ENCODE measurements at regions of chr6 and their contacts with region 1.

Region 1: DNA sequence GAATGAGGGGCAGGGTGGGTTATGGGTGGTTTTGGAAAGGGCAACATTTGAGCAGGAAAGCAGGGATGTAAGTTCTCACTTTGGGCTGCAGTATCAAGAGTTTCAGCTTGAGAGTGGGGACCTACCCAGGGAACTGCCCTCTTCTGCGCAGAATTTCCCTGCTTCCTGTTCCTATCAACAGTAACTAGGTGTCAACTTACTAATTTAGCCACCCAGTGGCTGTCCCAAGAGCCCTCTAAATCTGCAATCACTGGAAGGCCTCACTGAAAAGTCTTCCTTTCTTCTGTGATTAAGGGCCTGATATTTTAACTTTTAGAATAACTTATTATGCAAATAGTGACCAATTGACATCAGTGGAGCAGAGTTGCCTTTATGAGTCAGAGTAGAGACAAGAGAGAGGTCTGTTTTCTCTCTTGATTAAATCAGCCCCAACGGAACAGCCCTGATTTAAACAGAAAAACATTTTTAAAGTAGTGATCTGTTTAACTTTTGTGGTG is 118.2 kb upstream of the RIPOR2 start:
- DNase-seq: peak in 2 of 5 donors; percentile 28 to 30
- H3K4me3 ChIP-seq: no peak overlapping the region
- H3K4me3 Mint-ChIP-seq: peak overlapping the region in 6 of 8 donors; percentile 6 to 74 (median 37)
- H3K27ac ChIP-seq: peak overlapping the region; percentile 21
- H3K27ac Mint-ChIP-seq: peak overlapping the region; percentile 54 to 90 (median 87)
- H3K4me1 ChIP-seq: peaks cover 94% of the 10 kb centered on the region
- H3K4me1 Mint-ChIP-seq: peaks cover 61 to 88% (median 81%) of the 10 kb centered on the region in 4 donors
- H3K27me3 ChIP-seq: no peaks in the 10 kb centered on the region
- H3K27me3 Mint-ChIP-seq: no peaks in the 10 kb centered on the region

Region 2: DNA sequence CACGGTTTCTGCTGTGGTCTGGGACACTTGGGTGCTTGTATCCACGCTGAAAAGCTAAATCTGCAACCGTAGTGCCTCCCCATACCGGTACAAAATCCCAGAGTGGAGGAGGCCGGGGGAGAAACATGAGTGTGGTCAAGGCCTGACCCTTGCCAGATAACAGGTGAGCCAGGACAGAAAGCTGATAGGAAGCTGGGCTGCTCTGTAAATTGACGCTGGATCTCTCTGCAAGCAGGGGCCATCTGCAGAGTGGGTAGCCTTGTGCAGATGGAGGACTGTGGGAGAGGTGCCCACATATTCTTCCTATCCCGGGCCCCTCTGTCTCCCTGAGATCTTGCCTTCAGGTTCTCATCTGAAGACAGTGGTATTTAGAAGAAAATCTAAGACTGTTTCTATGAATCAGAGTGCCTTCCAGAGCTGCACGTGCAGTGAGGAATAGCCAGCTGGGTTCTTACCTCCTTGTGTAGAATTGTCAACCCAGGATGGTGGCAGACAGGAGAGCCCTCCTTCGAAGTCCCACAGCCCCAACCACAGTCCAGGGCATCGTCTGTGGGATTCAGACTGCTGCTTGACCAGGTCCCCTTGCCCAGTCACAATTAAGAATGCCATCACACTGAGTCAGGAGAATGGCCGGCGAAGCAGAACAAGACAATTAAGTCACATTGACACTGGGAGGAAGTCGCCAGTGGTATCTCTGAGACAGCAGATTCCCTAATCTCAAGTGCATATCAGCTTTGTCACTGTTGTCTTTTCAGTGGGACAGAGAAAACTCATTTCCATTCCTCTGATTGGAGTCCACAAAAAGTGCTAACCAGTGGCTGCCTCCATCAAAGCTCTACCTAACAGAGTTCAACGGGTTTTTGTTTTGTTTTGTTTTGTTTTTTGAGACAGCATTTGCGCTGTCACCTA is 18.1 kb before region 1 on chr6:
- CTCF ChIA-PET with region 1: interaction called, 591 read pairs
- POLR2A ChIA-PET with region 1: interaction called, 120 read pairs
- intact Hi-C with region 1: loop called (anchors 2 kb)
- DNase-seq: peak; percentile 34 to 51 (median 37)
- H3K4me3 ChIP-seq: peak overlapping the region; percentile 44 to 68
- H3K4me3 Mint-ChIP-seq: peak overlapping the region; percentile 84 to 93 (median 90)
- H3K27ac ChIP-seq: peak overlapping the region; percentile 69
- H3K27ac Mint-ChIP-seq: peak overlapping the region; percentile 92 to 100 (median 96)
- H3K4me1 ChIP-seq: peaks cover 88% of the 10 kb centered on the region
- H3K4me1 Mint-ChIP-seq: peaks cover 61 to 88% (median 72%) of the 10 kb centered on the region in 4 donors
- H3K27me3 ChIP-seq: no peaks in the 10 kb centered on the region
- H3K27me3 Mint-ChIP-seq: no peaks in the 10 kb centered on the region

Region 3: GRCh38 chr6:25042036-25042521 is 11.8 kb before region 1 on chr6:
- CTCF ChIA-PET with region 1: interaction called, 591 read pairs
- POLR2A ChIA-PET with region 1: interaction called, 120 read pairs
- intact Hi-C with region 1: loop called (anchors 1 kb)
- DNase-seq: peak; percentile 59 to 86 (median 65)
- H3K4me3 ChIP-seq: peak overlapping the region; percentile 67 to 82
- H3K4me3 Mint-ChIP-seq: peak overlapping the region; percentile 95 to 99 (median 96)
- H3K27ac ChIP-seq: peak overlapping the region; percentile 93
- H3K27ac Mint-ChIP-seq: peak overlapping the region; percentile 94 to 100 (median 98)
- H3K4me1 ChIP-seq: peaks cover 63% of the 10 kb centered on the region
- H3K4me1 Mint-ChIP-seq: peaks cover 50 to 85% (median 63%) of the 10 kb centered on the region in 4 donors
- H3K27me3 ChIP-seq: no peaks in the 10 kb centered on the region
- H3K27me3 Mint-ChIP-seq: no peaks in the 10 kb centered on the region

Region 4: GRCh38 chr6:25107218-25107617 is 53.3 kb after region 1 on chr6:
- CTCF ChIA-PET with region 1: no interaction called
- POLR2A ChIA-PET with region 1: no interaction called
- intact Hi-C with region 1: no loop called
- DNase-seq: no peak
- H3K4me3 ChIP-seq: no peak overlapping the region
- H3K4me3 Mint-ChIP-seq: no peak overlapping the region
- H3K27ac ChIP-seq: no peak overlapping the region
- H3K27ac Mint-ChIP-seq: peak overlapping the region in 1 of 7 donors; percentile 73
- H3K4me1 ChIP-seq: no peaks in the 10 kb centered on the region
- H3K4me1 Mint-ChIP-seq: peaks cover 0 to 6% (median 3%) of the 10 kb centered on the region in 4 donors
- H3K27me3 ChIP-seq: no peaks in the 10 kb centered on the region
- H3K27me3 Mint-ChIP-seq: no peaks in the 10 kb centered on the region

Region 5: GRCh38 chr6:25130518-25130917 is 76.6 kb after region 1 on chr6:
- CTCF ChIA-PET with region 1: no interaction called
- POLR2A ChIA-PET with region 1: no interaction called
- intact Hi-C with region 1: no loop called
- DNase-seq: no peak
- H3K4me3 ChIP-seq: no peak overlapping the region
- H3K4me3 Mint-ChIP-seq: peak overlapping the region in 1 of 8 donors; percentile 17
- H3K27ac ChIP-seq: no peak overlapping the region
- H3K27ac Mint-ChIP-seq: no peak overlapping the region
- H3K4me1 ChIP-seq: peaks cover 59% of the 10 kb centered on the region
- H3K4me1 Mint-ChIP-seq: peaks cover 23 to 62% (median 46%) of the 10 kb centered on the region in 4 donors
- H3K27me3 ChIP-seq: no peaks in the 10 kb centered on the region
- H3K27me3 Mint-ChIP-seq: no peaks in the 10 kb centered on the region